B cell (primary cell): ENCODE measurements at regions of chr15 and their contacts with region 1.

Region 1: DNA sequence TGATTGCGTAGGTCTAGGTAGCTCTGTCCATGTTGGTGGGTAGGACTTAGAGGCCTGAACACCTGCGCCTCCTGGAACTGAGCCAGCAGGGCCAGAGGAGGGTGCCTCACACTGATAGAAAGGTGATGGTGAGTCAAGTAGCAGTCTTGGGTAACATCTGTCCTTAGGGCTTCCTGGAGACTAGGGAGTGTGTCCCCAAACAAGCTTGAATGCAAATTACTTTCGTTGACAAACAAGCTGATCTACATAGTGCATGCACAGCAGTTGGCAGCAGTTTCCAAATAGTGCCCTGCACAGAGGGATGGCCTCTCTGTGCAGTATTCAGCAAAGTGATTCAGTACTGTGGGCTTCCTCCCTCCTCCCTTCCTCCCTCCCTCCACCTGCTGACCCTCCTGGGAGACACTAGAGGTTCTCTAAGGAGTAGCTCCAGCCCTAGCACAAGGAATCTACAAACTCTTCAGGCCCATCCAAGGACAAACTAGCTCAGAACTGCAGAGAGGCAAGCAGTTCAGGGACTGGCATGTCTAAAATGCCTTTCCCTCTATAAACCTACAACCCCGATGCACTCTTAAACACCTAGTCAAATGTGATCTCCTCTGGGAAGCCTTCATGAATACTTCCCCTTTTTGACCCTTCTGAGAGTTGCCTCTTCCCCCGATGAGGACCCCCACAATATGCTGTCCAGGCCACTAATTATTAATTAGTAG is 61.0 kb downstream of the TLE3 start:
- DNase-seq: peak; percentile 75
- ATAC-seq: peak; percentile 69
- H3K4me3 ChIP-seq: peak overlapping the region in 2 of 5 experiments; percentile 11 to 13
- H3K4me3 Mint-ChIP-seq: peak overlapping the region; percentile 75
- H3K27ac ChIP-seq: peak overlapping the region; percentile 70 to 78
- H3K27ac Mint-ChIP-seq: peak overlapping the region; percentile 91
- H3K4me1 ChIP-seq: peaks cover 39 to 48% of the 10 kb centered on the region in 2 donors
- H3K4me1 Mint-ChIP-seq: peaks cover 59% of the 10 kb centered on the region
- H3K27me3 ChIP-seq: no peaks in the 10 kb centered on the region
- H3K27me3 Mint-ChIP-seq: no peaks in the 10 kb centered on the region
- CTCF ChIP-seq: no peak

Region 2: GRCh38 chr15:69760890-69761568 is 275.7 kb before region 1 on chr15:
- CTCF ChIA-PET with region 1: interaction called, 7 read pairs
- POLR2A ChIA-PET with region 1: no interaction called
- intact Hi-C with region 1: loop called (anchors 1 kb)
- DNase-seq: peak; percentile 63
- ATAC-seq: peak; percentile 80
- H3K4me3 ChIP-seq: no peak overlapping the region
- H3K4me3 Mint-ChIP-seq: peak overlapping the region; percentile 76
- H3K27ac ChIP-seq: no peak overlapping the region
- H3K27ac Mint-ChIP-seq: peak overlapping the region; percentile 81
- H3K4me1 ChIP-seq: peaks cover 65 to 68% of the 10 kb centered on the region in 2 donors
- H3K4me1 Mint-ChIP-seq: peaks cover 69% of the 10 kb centered on the region
- H3K27me3 ChIP-seq: no peaks in the 10 kb centered on the region
- H3K27me3 Mint-ChIP-seq: peaks cover 3% of the 10 kb centered on the region
- CTCF ChIP-seq: no peak

Region 3: GRCh38 chr15:69869881-69870505 is 166.7 kb before region 1 on chr15:
- CTCF ChIA-PET with region 1: no interaction called
- POLR2A ChIA-PET with region 1: no interaction called
- intact Hi-C with region 1: no loop called
- DNase-seq: no peak
- ATAC-seq: no peak
- H3K4me3 ChIP-seq: no peak overlapping the region
- H3K4me3 Mint-ChIP-seq: no peak overlapping the region
- H3K27ac ChIP-seq: no peak overlapping the region
- H3K27ac Mint-ChIP-seq: no peak overlapping the region
- H3K4me1 ChIP-seq: no peaks in the 10 kb centered on the region
- H3K4me1 Mint-ChIP-seq: no peaks in the 10 kb centered on the region
- H3K27me3 ChIP-seq: peaks cover 0 to 10% (median 4%) of the 10 kb centered on the region in 4 experiments
- H3K27me3 Mint-ChIP-seq: peaks cover 9% of the 10 kb centered on the region
- CTCF ChIP-seq: no peak

Region 4: DNA sequence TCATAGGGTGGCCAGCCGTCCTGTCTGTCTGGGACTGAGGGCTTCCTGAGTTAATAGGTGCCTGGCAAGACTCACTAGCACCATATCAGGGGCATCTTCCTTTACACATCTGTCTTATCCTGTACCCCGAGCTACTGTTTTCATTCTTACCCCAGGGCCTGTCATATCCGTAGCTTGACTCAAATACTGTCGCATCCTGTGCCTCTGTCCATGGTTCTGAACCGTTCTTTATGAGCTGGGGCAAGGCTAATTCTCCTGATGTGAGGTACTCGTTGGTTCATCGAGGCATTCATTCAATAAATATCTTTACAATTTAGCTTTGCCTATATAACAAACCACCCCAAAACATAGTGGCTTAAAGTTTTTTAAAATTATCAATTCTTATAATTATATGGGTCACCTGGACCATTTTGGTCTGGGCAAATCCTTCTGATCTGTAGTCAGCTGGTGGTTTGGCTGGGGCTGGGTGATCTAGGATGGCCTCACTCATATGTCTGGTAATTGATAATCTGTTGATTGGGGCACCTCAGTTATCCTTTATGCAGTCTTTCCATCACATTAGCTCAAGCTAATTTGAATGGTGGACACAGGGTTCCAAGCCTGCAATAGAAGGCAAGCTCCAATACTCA is 60.3 kb before region 1 on chr15:
- CTCF ChIA-PET with region 1: interaction called, 5 read pairs
- POLR2A ChIA-PET with region 1: interaction called, 5 read pairs
- intact Hi-C with region 1: loop called (anchors 1 kb)
- DNase-seq: peak; percentile 75
- ATAC-seq: no peak
- H3K4me3 ChIP-seq: no peak overlapping the region
- H3K4me3 Mint-ChIP-seq: no peak overlapping the region
- H3K27ac ChIP-seq: no peak overlapping the region
- H3K27ac Mint-ChIP-seq: no peak overlapping the region
- H3K4me1 ChIP-seq: peaks cover 24 to 29% of the 10 kb centered on the region in 2 donors
- H3K4me1 Mint-ChIP-seq: peaks cover 30% of the 10 kb centered on the region
- H3K27me3 ChIP-seq: peaks cover 0 to 18% (median 3%) of the 10 kb centered on the region in 4 experiments
- H3K27me3 Mint-ChIP-seq: peaks cover 24% of the 10 kb centered on the region
- CTCF ChIP-seq: no peak

Region 5: GRCh38 chr15:70014860-70015490 is 21.8 kb before region 1 on chr15:
- CTCF ChIA-PET with region 1: interaction called, 16 read pairs
- POLR2A ChIA-PET with region 1: interaction called, 7 read pairs
- intact Hi-C with region 1: loop called (anchors 1 kb)
- DNase-seq: peak; percentile 72
- ATAC-seq: peak; percentile 76
- H3K4me3 ChIP-seq: peak overlapping the region in 1 of 5 experiments; percentile 37
- H3K4me3 Mint-ChIP-seq: peak overlapping the region; percentile 76
- H3K27ac ChIP-seq: peak overlapping the region; percentile 81 to 84
- H3K27ac Mint-ChIP-seq: peak overlapping the region; percentile 97
- H3K4me1 ChIP-seq: peaks cover 69 to 77% of the 10 kb centered on the region in 2 donors
- H3K4me1 Mint-ChIP-seq: peaks cover 79% of the 10 kb centered on the region
- H3K27me3 ChIP-seq: no peaks in the 10 kb centered on the region
- H3K27me3 Mint-ChIP-seq: no peaks in the 10 kb centered on the region
- CTCF ChIP-seq: no peak

Region 6: DNA sequence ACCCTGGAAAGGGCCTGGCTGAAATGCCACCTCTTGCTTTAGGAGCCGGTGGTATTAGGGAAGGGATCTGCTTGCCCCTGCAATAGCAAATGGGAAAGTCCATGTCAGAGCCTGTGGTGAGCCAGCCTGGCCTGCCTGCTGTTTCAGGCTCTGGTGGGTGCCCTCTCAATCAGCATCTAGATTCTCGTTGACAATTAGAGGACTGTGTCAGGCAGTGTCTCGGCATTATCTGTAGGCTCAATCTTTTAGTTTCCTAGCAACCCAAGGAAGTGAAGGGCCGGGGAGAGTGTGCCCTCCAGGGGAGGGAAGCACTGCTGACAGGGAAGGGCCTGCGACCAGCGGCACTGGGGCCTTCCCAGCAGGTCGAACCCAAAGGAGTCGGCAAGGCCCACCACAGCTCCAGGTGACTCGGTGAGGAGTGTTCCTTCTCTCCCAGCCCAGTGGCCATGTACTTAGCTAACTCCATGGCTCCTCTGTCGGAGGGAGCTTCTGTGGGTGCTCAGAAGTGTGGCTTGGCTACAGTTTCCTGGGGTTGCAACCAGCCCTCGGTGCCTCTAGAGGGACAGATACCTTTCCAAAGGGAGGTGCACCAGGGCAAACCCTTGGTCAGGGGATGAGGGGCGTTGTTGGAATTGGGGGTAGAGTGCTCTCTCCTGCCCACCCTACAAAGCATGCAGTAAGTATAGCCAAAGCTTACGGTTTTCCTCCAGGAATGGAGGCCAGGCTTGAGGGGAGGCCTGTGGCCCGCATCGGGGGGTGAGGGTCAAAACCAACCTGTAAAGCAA is 19.1 kb after region 1 on chr15:
- CTCF ChIA-PET with region 1: no interaction called
- POLR2A ChIA-PET with region 1: no interaction called
- intact Hi-C with region 1: no loop called
- DNase-seq: no peak
- ATAC-seq: no peak
- H3K4me3 ChIP-seq: no peak overlapping the region
- H3K4me3 Mint-ChIP-seq: no peak overlapping the region
- H3K27ac ChIP-seq: no peak overlapping the region
- H3K27ac Mint-ChIP-seq: peak overlapping the region; percentile 41
- H3K4me1 ChIP-seq: no peaks in the 10 kb centered on the region
- H3K4me1 Mint-ChIP-seq: no peaks in the 10 kb centered on the region
- H3K27me3 ChIP-seq: no peaks in the 10 kb centered on the region
- H3K27me3 Mint-ChIP-seq: no peaks in the 10 kb centered on the region
- CTCF ChIP-seq: no peak

Region 7: DNA sequence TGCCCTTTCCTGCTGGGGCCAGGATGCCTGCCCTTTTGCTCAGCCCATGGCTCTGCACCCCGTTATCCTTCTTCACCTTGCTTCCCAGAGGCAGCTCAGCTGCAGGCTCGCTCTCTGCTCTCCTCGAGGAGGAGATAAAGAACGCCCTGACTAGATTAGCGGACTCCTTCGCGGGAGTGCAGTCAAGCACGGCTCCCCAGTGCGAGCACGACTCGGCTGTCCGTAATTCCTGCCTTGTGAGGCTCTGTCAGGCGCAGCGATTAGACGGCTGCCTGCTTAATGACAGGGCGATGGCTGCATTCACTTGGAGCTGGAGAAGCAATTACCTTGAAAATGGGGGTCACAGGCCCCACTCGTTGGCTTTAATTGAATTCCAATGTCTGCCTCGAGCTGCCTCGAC is 35.1 kb after region 1 on chr15:
- CTCF ChIA-PET with region 1: interaction called, 12 read pairs
- POLR2A ChIA-PET with region 1: no interaction called
- intact Hi-C with region 1: loop called (anchors 5 kb)
- DNase-seq: peak; percentile 39
- ATAC-seq: no peak
- H3K4me3 ChIP-seq: no peak overlapping the region
- H3K4me3 Mint-ChIP-seq: peak overlapping the region; percentile 16
- H3K27ac ChIP-seq: peak overlapping the region in 1 of 2 donors; percentile 31
- H3K27ac Mint-ChIP-seq: peak overlapping the region; percentile 71
- H3K4me1 ChIP-seq: peaks cover 15 to 30% of the 10 kb centered on the region in 2 donors
- H3K4me1 Mint-ChIP-seq: peaks cover 55% of the 10 kb centered on the region
- H3K27me3 ChIP-seq: no peaks in the 10 kb centered on the region
- H3K27me3 Mint-ChIP-seq: no peaks in the 10 kb centered on the region
- CTCF ChIP-seq: no peak